ENCODE measurements at regions of chr1 and their contacts with region 1.

Region 1: GRCh38 chr1:26083246-26083645 is 15.8 kb upstream of the TRIM63 start:
- DNase-seq: no peak
- ATAC-seq: no peak; the same call in 1 of the 2 replicates
- H3K4me3 ChIP-seq: no peak overlapping the region
- H3K27ac ChIP-seq: no peak overlapping the region
- H3K4me1 ChIP-seq: no peaks in the 10 kb centered on the region
- H3K27me3 ChIP-seq: no peaks in the 10 kb centered on the region
- CTCF ChIP-seq: no peak

Region 2: DNA sequence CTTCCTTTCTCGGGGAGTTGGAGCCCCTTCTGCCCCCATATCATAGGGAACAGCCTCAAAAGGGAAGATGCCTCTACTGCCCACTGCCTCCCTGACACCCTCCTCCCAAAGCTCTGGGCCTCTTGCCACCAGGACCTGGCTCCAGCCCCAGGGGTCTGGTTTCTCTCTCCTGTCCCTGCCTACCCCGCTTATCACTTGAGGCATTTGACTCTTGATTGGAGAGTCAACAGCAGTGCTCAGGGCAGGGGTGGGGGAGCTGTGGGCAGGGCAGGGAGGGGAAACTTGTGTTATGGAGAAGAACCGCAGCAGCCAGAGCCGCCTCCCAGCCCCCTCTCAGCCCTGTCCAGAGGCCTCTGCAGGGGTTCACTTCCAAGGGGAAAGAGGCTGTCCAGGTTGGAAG is 16.4 kb before region 1 on chr1:
- CTCF ChIA-PET with region 1: no interaction called
- POLR2A ChIA-PET with region 1: interaction called, 13 read pairs
- in situ Hi-C with region 1: no loop called
- intact Hi-C with region 1: no loop called
- DNase-seq: no peak
- ATAC-seq: no peak
- H3K4me3 ChIP-seq: no peak overlapping the region
- H3K27ac ChIP-seq: no peak overlapping the region
- H3K4me1 ChIP-seq: no peaks in the 10 kb centered on the region; the same call in 1 of the 2 replicates
- H3K27me3 ChIP-seq: 0 out of 2 replicates have a peak, but pooled peaks cover 2% of the 10 kb centered on the region
- CTCF ChIP-seq: no peak